ENCODE measurements at regions of chr7 and their contacts with region 1.

Region 1: GRCh38 chr7:22726345-22727185 is 435 bp upstream of the IL6 start:
- DNase-seq: peak; percentile 34
- H3K4me3 ChIP-seq: peak overlapping the region; percentile 8 to 42 (median 17)
- H3K27ac ChIP-seq: peak overlapping the region; percentile 59 to 62 (median 61)
- H3K4me1 ChIP-seq: peaks cover 5 to 45% (median 9%) of the 10 kb centered on the region in 4 donors
- H3K27me3 ChIP-seq: no peaks in the 10 kb centered on the region
- CTCF ChIP-seq: peak; percentile 32 to 53 (median 44)
- EP300 ChIP-seq: no peak
- POLR2A ChIP-seq: no peak

Region 2: GRCh38 chr7:22559829-22560489 is 166.6 kb before region 1 on chr7:
- in situ Hi-C with region 1: loop called (anchors 5 to 10 kb)
- intact Hi-C with region 1: loop called (anchors 2 kb)
- DNase-seq: peak; percentile 65
- H3K4me3 ChIP-seq: no peak overlapping the region
- H3K27ac ChIP-seq: no peak overlapping the region
- H3K4me1 ChIP-seq: peaks cover 6 to 25% (median 7%) of the 10 kb centered on the region in 4 donors
- H3K27me3 ChIP-seq: peaks cover 13% of the 10 kb centered on the region
- CTCF ChIP-seq: peak; percentile 70 to 88 (median 83)
- EP300 ChIP-seq: no peak
- POLR2A ChIP-seq: no peak